ENCODE measurements at regions of chr22 and their contacts with region 1.

Region 1: GRCh38 chr22:35678836-35679235 is 30.6 kb downstream of the APOL6 start:
- DNase-seq: no peak
- H3K4me3 ChIP-seq: no peak overlapping the region
- H3K27ac ChIP-seq: no peak overlapping the region
- H3K4me1 ChIP-seq: peaks cover 2% of the 10 kb centered on the region
- H3K27me3 ChIP-seq: no peaks in the 10 kb centered on the region
- CTCF ChIP-seq: no peak

Region 2: GRCh38 chr22:35409783-35410662 is 268.8 kb before region 1 on chr22:
- intact Hi-C with region 1: no loop called
- DNase-seq: no peak
- H3K4me3 ChIP-seq: no peak overlapping the region
- H3K27ac ChIP-seq: peak overlapping the region; percentile 36
- H3K4me1 ChIP-seq: no peaks in the 10 kb centered on the region
- H3K27me3 ChIP-seq: no peaks in the 10 kb centered on the region
- CTCF ChIP-seq: no peak

Region 3: GRCh38 chr22:35739076-35739930 is 60.5 kb after region 1 on chr22:
- intact Hi-C with region 1: loop called (anchors 10 kb)
- DNase-seq: no peak
- H3K4me3 ChIP-seq: no peak overlapping the region
- H3K27ac ChIP-seq: no peak overlapping the region
- H3K4me1 ChIP-seq: peaks cover 54% of the 10 kb centered on the region
- H3K27me3 ChIP-seq: no peaks in the 10 kb centered on the region
- CTCF ChIP-seq: peak; percentile 54

Measured in left ventricle myocardium inferior (tissue), 1 donor.